Mammary epithelial cell (primary cell): ENCODE measurements at regions of chr6 and their contacts with region 1.

Region 1: DNA sequence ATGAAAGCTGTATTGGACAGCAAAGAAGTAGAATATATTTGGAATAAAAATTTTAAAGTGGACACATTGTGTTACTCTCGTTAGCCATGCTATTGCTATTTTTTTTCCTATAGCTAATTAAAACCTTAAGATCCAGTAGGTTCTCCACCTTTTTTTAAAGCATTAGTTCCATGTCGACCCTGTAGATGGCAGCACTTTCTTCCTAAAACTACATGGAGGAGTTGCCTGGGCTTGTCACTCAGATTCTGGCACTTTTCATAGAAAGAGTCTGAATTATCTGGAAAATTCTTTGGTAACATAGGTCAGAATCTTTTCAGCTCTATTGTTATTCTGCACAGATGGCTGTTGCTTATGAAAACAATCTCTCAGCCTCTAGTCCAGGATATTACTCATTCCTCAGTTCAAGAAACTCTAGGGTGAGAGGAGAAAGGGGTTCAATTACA is 42.0 kb upstream of the ESR1 start:
- DNase-seq: peak; percentile 83
- H3K4me3 ChIP-seq: peak overlapping the region in 1 of 3 experiments; percentile 17
- H3K27ac ChIP-seq: no peak overlapping the region
- H3K4me1 ChIP-seq: peaks cover 18% of the 10 kb centered on the region
- H3K27me3 ChIP-seq: no peaks in the 10 kb centered on the region
- CTCF ChIP-seq: peak; percentile 70 to 74

Region 2: GRCh38 chr6:151475653-151476523 is 289.6 kb before region 1 on chr6:
- CTCF ChIA-PET with region 1: no interaction called
- dilution Hi-C with region 1: no loop called
- in situ Hi-C with region 1: no loop called
- intact Hi-C with region 1: loop called (anchors 10 kb)
- DNase-seq: peak; percentile 17
- H3K4me3 ChIP-seq: no peak overlapping the region
- H3K27ac ChIP-seq: no peak overlapping the region
- H3K4me1 ChIP-seq: no peaks in the 10 kb centered on the region
- H3K27me3 ChIP-seq: no peaks in the 10 kb centered on the region
- CTCF ChIP-seq: peak; percentile 68 to 75

Region 3: DNA sequence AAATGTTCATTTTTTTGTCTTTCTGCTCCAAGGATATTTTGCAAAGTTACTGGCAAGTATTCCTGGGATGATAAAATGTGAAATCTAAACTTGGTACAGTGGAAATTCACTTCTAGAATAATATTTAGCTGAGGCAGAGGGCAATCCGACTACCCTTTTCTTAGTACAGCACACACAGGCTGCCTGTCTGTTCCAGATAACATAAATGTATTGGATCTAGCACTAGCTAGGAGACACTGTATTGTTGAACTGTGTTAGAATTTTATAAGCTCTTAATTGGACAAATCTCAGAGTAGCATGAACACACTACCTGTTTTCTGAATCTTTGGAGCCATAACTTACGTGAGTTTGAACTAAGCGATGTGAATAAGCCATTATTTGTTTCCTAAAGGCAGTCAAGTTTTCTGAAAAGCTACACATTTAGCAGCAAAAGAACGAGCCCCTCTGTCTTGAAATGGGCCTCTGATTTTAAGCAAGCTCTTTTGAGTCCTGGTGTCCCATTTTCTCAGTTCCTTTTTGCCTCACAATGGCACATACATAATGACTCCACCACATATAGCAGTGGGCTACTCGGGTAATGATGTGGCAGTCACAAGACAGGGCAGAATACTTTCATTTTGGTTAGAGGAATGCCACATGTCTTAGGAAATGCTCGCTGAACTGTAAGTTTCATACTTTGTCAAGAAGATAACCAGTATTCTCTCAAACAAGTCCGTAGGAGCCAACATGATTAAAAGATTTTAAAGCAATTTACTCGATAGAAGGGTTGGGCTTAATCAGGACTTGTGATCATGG is 74.5 kb before region 1 on chr6:
- CTCF ChIA-PET with region 1: interaction called, 3 read pairs
- dilution Hi-C with region 1: no loop called
- in situ Hi-C with region 1: no loop called
- intact Hi-C with region 1: loop called (anchors 5 kb)
- DNase-seq: peak; percentile 39
- H3K4me3 ChIP-seq: peak overlapping the region; percentile 23 to 29 (median 29)
- H3K27ac ChIP-seq: peak overlapping the region; percentile 2
- H3K4me1 ChIP-seq: peaks cover 12% of the 10 kb centered on the region
- H3K27me3 ChIP-seq: no peaks in the 10 kb centered on the region
- CTCF ChIP-seq: no peak

Region 4: DNA sequence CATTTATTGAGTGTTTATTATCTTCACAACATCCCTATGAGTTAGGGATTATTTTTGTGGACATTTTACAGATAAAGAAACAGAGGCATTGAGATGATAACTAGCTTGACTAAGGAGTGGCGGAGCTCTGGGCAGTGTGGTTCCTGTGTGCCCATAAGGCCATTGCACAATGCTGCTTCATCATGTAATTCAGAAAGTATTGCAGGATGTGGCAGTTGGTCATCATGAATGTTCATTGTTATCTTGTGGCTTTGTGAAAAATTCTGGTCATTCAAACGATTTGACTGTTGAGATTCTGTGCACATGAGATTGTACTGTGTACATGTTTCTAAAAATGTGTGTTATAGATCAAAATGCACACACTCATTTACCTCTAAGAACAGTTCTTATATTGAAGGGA is 192.9 kb after region 1 on chr6:
- CTCF ChIA-PET with region 1: no interaction called
- dilution Hi-C with region 1: no loop called
- in situ Hi-C with region 1: no loop called
- intact Hi-C with region 1: loop called (anchors 1 kb)
- DNase-seq: peak; percentile 80
- H3K4me3 ChIP-seq: no peak overlapping the region
- H3K27ac ChIP-seq: peak overlapping the region; percentile 28
- H3K4me1 ChIP-seq: peaks cover 26% of the 10 kb centered on the region
- H3K27me3 ChIP-seq: no peaks in the 10 kb centered on the region
- CTCF ChIP-seq: no peak

Region 5: GRCh38 chr6:152338335-152339125 is 573.1 kb after region 1 on chr6:
- CTCF ChIA-PET with region 1: no interaction called
- dilution Hi-C with region 1: no loop called
- in situ Hi-C with region 1: no loop called
- intact Hi-C with region 1: loop called (anchors 10 kb)
- DNase-seq: peak; percentile 8
- H3K4me3 ChIP-seq: no peak overlapping the region
- H3K27ac ChIP-seq: no peak overlapping the region
- H3K4me1 ChIP-seq: no peaks in the 10 kb centered on the region
- H3K27me3 ChIP-seq: no peaks in the 10 kb centered on the region
- CTCF ChIP-seq: peak; percentile 94 to 97